ENCODE measurements at regions of chr15 and their contacts with region 1.

Region 1: GRCh38 chr15:84570164-84570735 is 30.6 kb upstream of the ZSCAN2 start:
- DNase-seq: peak; percentile 8 to 73 (median 55)
- ATAC-seq: peak; percentile 48
- H3K4me3 ChIP-seq: peak overlapping the region; percentile 73 to 87
- H3K4me3 Mint-ChIP-seq: peak overlapping the region; percentile 86
- H3K27ac ChIP-seq: peak overlapping the region; percentile 57 to 66
- H3K27ac Mint-ChIP-seq: peak overlapping the region; percentile 85
- H3K4me1 ChIP-seq: no peaks in the 10 kb centered on the region
- H3K4me1 Mint-ChIP-seq: peaks cover 11% of the 10 kb centered on the region
- H3K27me3 ChIP-seq: no peaks in the 10 kb centered on the region
- H3K27me3 Mint-ChIP-seq: no peaks in the 10 kb centered on the region
- CTCF ChIP-seq: no peak

Region 2: DNA sequence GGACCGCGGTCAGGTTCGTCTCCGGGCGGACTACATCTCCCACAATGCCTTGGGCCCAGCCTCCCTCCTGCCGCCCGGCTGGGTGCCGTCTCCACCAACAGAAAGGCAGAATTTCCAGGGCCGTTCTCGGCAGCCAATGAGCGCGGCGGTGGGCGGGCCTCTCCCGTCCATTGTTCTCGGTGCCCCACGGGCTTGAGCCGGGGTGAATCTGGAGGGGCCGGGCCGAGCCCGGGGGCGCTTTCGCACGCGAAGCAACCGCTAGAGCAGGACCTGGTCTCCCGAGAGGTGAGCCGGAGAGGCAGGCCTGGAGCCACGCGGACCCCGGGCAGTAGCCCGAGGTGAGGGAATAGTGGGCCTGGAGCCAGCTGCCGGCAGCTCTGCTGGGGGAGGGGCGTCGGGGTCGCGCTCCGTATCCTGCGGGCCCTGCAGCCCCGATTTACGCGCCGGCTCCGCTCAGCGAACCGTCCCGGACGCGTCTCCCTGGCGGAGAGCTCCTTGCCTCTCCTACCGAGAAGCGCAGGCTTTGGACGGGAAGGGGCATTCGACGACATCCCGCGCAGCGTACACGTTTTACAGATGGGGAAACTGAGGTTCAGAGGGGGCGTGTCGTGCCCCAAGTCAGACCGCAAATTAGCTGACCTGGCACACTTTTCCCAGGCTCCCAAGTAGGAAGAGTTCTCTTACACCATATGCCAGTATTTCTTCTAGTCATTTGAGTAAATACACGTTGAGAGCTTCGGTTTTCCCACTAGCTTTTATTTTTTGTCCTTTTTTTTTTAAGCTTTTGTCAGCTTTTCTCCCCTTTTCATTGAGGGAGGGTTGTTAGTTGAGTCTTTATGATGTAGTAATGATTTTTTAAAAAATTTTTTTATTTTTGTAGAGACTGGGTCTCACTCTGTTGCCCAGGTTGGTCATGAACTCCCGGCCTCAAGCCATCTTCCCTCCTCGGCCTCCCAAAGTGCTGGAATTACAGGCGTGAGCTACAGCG is 30.9 kb after region 1 on chr15 and contains the start of gene ZSCAN2:
- CTCF ChIA-PET with region 1: interaction called, 5 read pairs
- POLR2A ChIA-PET with region 1: interaction called, 4 read pairs
- intact Hi-C with region 1: loop called in 1 of 2 experiments (anchors 1 kb)
- DNase-seq: peak; percentile 81 to 95 (median 92)
- ATAC-seq: peak; percentile 95
- H3K4me3 ChIP-seq: peak within 1 kb of the TSS; percentile 93 to 100
- H3K4me3 Mint-ChIP-seq: peak within 1 kb of the TSS; percentile 99
- H3K27ac ChIP-seq: peak within 1 kb of the TSS; percentile 34 to 58
- H3K27ac Mint-ChIP-seq: peak within 1 kb of the TSS; percentile 93
- H3K4me1 ChIP-seq: peaks cover 42% of the 10 kb centered on the region
- H3K4me1 Mint-ChIP-seq: peaks cover 74% of the 10 kb centered on the region
- H3K27me3 ChIP-seq: no peaks in the 10 kb centered on the region
- H3K27me3 Mint-ChIP-seq: no peaks in the 10 kb centered on the region
- CTCF ChIP-seq: no peak
- total RNA-seq, gene ZSCAN2: 2.7 to 4.4 TPM